ENCODE measurements at regions of chr1 and their contacts with region 1.

Region 1: GRCh38 chr1:45583264-45583665 is 576 bp upstream of the NASP start:
- DNase-seq: peak; percentile 85 to 98 (median 93)
- ATAC-seq: peak; percentile 72
- H3K4me3 ChIP-seq: peak overlapping the region; percentile 82 to 98
- H3K4me3 Mint-ChIP-seq: peak overlapping the region; percentile 92
- H3K27ac ChIP-seq: peak overlapping the region; percentile 86 to 89
- H3K27ac Mint-ChIP-seq: peak overlapping the region; percentile 98
- H3K4me1 ChIP-seq: peaks cover 23% of the 10 kb centered on the region
- H3K4me1 Mint-ChIP-seq: peaks cover 27% of the 10 kb centered on the region
- H3K27me3 ChIP-seq: no peaks in the 10 kb centered on the region
- H3K27me3 Mint-ChIP-seq: no peaks in the 10 kb centered on the region
- CTCF ChIP-seq: no peak

Region 2: DNA sequence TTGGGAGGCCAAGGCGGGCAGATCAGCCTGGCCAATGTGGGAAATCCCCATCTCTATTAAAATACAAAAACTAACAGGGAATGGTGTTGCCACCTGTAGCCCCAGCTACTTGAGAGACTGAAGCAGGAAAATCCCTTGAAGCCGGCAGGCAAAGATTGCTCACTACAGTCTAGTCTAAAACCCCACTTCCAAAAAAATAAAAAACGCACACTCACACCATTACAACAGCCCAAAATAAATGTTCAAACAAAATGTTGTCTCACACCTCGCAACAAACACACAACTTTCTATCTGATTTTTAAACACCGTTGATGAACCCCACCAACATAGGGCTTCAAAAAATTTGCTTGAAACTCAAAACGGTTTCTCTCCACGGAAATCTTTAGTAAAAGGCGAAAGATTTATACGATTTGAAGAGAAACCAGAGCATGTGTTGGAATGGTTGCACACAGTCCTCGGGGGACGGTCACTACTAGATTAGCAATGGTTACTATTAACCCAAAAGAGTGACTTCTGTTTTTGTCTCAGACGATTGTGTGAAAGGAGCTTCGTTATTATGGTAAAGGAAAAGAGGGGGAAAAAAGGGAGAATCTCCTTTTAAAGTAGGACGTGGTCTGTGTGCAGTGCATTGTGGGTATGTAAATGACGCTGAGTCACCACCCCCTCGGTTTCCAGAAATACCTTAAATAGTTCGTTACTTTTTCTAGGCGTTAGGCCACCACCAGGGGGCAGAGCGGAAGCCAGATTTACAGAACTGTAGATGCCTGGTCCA is 852.3 kb before region 1 on chr1 and contains the start of gene RNU5D-1:
- CTCF ChIA-PET with region 1: no interaction called
- POLR2A ChIA-PET with region 1: no interaction called
- intact Hi-C with region 1: loop called (anchors 5 to 10 kb)
- DNase-seq: peak; percentile 86 to 96 (median 94)
- ATAC-seq: peak; percentile 75
- H3K4me3 ChIP-seq: peak within 1 kb of the TSS; percentile 36 to 47
- H3K4me3 Mint-ChIP-seq: peak within 1 kb of the TSS; percentile 84
- H3K27ac ChIP-seq: peak within 1 kb of the TSS; percentile 98 to 99
- H3K27ac Mint-ChIP-seq: peak within 1 kb of the TSS; percentile 100
- H3K4me1 ChIP-seq: peaks cover 14% of the 10 kb centered on the region
- H3K4me1 Mint-ChIP-seq: peaks cover 36% of the 10 kb centered on the region
- H3K27me3 ChIP-seq: no peaks in the 10 kb centered on the region
- H3K27me3 Mint-ChIP-seq: no peaks in the 10 kb centered on the region
- CTCF ChIP-seq: peak; percentile 93
- total RNA-seq, gene RNU5D-1: not detected

Region 3: DNA sequence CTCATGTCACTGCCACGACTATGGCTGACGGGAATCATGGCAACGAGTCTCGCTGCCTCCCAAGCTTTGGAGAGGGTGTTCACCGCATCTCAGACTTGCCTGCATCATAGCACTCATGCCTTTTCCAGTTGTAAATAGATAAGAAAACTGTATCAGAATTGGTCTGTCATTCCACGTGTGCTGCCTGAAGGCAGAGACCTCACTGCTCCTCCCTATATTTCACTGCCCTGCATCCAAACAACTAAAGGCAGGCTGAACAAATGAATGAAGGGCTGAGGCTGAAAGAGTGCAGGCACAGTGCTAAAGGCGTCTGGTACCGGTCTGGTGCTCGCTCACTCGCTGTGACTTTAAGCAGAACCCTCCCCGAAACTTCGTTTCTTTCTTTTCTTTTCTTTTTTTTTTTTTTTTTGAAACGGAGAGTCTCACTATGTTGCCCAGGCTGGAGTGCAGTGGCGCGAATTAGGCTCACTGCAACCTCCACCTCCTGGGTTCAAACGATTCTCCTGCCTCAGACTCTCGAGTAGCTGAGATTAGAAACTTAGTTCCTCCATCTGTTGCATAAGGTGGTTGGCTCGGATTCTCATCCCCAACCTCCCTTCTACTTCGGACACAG is 597.4 kb before region 1 on chr1:
- CTCF ChIA-PET with region 1: no interaction called
- POLR2A ChIA-PET with region 1: no interaction called
- intact Hi-C with region 1: loop called in 1 of 2 experiments (anchors 5 kb)
- DNase-seq: no peak
- ATAC-seq: no peak
- H3K4me3 ChIP-seq: peak overlapping the region; percentile 70 to 85
- H3K4me3 Mint-ChIP-seq: peak overlapping the region; percentile 97
- H3K27ac ChIP-seq: peak overlapping the region; percentile 31 to 42
- H3K27ac Mint-ChIP-seq: peak overlapping the region; percentile 93
- H3K4me1 ChIP-seq: peaks cover 15% of the 10 kb centered on the region
- H3K4me1 Mint-ChIP-seq: peaks cover 30% of the 10 kb centered on the region
- H3K27me3 ChIP-seq: no peaks in the 10 kb centered on the region
- H3K27me3 Mint-ChIP-seq: no peaks in the 10 kb centered on the region
- CTCF ChIP-seq: no peak

Region 4: DNA sequence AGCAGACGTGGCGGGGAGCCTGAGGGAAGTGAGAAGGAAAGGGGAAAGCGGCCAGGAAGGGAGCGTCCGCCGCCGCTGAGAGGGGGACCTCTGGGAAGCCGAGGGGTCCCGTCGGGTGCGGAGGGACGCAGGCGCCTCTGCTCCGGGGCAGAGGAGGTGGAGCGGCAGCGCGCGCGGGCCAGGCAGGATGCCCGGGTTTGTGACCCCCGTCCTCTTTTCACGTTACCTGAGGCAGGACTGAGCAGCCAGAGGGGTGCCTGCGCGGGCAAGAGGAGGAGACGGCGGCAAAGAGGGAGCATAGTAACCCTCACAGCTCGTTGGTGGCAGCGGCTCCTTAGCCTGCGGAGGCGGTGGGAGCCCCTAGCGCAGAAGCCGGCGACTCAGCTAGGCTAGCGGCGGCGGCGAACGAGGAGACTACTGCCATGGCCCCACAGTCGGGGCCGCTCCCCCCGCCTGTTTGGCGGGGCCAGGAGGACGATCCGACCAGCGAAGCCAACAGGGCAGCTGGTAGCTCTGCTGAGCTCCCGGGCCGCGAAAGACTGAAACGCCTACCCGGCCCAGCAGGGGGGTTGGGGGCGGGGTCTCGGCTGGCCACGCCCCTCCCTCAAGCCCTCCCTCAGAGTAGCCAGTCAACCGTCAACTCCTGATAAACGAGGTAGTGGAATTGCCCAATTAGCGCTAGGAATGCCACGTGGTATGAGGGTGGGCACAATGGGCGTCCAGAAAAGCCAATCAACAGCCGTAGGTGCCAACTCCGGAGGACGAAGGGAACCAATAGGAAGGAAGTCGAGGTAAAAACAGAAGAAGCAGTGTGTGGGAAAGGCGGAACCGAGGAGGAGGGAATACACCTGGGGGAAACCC is 92.4 kb before region 1 on chr1 and contains the start of gene TESK2:
- CTCF ChIA-PET with region 1: interaction called, 6 read pairs
- POLR2A ChIA-PET with region 1: interaction called, 6 read pairs
- intact Hi-C with region 1: loop called in 1 of 2 experiments (anchors 1 kb)
- DNase-seq: peak; percentile 94 to 100 (median 95)
- ATAC-seq: peak; percentile 91
- H3K4me3 ChIP-seq: peak within 1 kb of the TSS; percentile 74 to 91
- H3K4me3 Mint-ChIP-seq: no peak within 1 kb of the TSS
- H3K27ac ChIP-seq: peak within 1 kb of the TSS; percentile 49 to 72
- H3K27ac Mint-ChIP-seq: no peak within 1 kb of the TSS
- H3K4me1 ChIP-seq: peaks cover 11% of the 10 kb centered on the region
- H3K4me1 Mint-ChIP-seq: peaks cover 16% of the 10 kb centered on the region
- H3K27me3 ChIP-seq: peaks cover 0 to 3% of the 10 kb centered on the region in 2 experiments
- H3K27me3 Mint-ChIP-seq: no peaks in the 10 kb centered on the region
- CTCF ChIP-seq: no peak
- total RNA-seq, gene TESK2: 4.6 to 5.8 TPM

Region 5: DNA sequence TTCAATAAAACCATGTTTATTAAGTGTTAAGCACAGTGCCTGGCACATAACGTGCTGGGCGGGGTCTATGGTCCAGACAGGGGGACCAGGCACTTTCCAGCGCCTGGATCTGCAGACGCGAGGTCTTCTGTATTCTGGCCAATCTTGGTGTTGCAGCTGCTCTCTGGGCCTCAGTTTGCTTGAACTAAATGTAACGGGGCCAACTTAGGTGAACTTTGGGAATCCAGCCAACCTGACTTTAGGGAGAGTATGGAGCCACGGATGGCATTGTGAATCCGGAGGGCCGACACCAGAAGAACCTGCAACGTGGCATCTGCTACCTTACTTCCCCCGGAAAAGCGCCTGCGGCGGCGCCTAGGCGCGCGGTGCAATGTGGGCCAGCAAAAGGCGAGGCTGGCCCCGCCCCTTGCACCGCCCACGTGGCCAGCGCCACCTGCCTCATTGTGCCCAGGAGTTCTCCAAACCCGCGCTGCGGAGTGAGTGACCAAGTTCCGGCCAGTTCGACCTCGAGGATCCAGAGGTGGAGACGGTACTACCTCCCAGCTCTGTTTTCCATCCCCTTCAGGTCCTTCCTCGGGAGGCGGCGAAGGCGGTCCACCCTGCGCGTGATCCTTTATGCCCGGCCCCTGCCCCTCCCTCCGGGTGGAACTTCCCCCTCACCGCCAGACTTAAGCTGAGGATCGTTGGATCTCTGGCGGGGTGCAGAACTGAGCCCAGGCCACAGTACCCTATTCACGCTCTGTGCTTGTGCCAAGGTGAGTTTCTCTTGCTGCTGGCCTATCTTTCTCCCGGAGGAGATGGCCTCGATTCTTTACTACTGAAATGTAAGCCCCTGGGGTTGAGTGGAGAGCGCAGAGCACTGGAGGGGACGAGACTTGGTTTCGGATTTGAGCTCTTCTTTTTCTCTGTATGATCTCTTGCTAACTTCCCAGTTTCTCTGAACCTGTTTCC is 32.6 kb before region 1 on chr1 and contains the start of gene AKR1A1:
- CTCF ChIA-PET with region 1: interaction called, 3 read pairs
- POLR2A ChIA-PET with region 1: interaction called, 5 read pairs
- intact Hi-C with region 1: loop called (anchors 1 kb)
- DNase-seq: peak; percentile 71 to 93 (median 83)
- ATAC-seq: peak; percentile 94
- H3K4me3 ChIP-seq: peak within 1 kb of the TSS; percentile 85 to 96
- H3K4me3 Mint-ChIP-seq: peak within 1 kb of the TSS; percentile 95
- H3K27ac ChIP-seq: peak within 1 kb of the TSS; percentile 76 to 91
- H3K27ac Mint-ChIP-seq: peak within 1 kb of the TSS; percentile 93
- H3K4me1 ChIP-seq: peaks cover 16% of the 10 kb centered on the region
- H3K4me1 Mint-ChIP-seq: peaks cover 23% of the 10 kb centered on the region
- H3K27me3 ChIP-seq: no peaks in the 10 kb centered on the region
- H3K27me3 Mint-ChIP-seq: no peaks in the 10 kb centered on the region
- CTCF ChIP-seq: no peak
- total RNA-seq, gene AKR1A1: 27.2 to 31.9 TPM

Region 6: DNA sequence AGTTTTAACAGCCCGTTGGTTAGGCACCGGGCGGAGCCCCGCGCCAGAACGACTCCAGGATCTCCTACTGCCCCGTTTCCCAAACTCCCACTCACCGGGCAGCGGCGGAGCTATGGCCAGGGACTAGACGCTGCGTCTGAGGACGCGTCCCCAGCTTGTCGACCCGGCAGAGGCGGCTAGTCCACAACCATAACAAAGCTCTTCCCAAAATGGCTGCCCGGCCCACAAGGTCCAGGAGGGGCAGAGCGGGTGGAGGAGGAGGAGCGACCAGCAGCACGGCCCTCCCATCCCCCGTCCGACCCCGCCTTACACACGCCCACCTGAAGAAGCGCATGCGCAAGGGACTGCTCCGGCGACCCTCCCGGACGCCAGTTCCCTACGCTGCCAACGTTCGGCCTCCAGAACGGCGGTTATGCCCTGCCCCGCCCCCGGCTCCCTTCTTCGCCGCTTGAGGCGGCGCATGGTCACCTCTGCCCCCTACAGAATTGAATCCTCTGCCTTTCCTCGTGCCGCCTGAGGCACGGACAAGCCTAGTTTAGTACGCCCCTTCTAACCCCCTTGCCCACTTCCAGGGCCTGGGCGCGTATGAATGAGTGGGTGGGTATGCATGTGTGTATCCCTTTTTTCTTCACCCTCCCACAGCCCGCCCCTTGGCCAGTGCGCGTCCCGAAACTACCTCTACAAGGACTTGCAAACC is 103.2 kb after region 1 on chr1 and contains the start of gene GPBP1L1:
- CTCF ChIA-PET with region 1: no interaction called
- POLR2A ChIA-PET with region 1: interaction called, 16 read pairs
- intact Hi-C with region 1: loop called (anchors 1 kb)
- DNase-seq: peak; percentile 95 to 98 (median 98)
- ATAC-seq: peak; percentile 72
- H3K4me3 ChIP-seq: peak within 1 kb of the TSS; percentile 99
- H3K4me3 Mint-ChIP-seq: peak within 1 kb of the TSS; percentile 97
- H3K27ac ChIP-seq: peak within 1 kb of the TSS; percentile 84 to 92
- H3K27ac Mint-ChIP-seq: peak within 1 kb of the TSS; percentile 100
- H3K4me1 ChIP-seq: peaks cover 39% of the 10 kb centered on the region
- H3K4me1 Mint-ChIP-seq: peaks cover 59% of the 10 kb centered on the region
- H3K27me3 ChIP-seq: no peaks in the 10 kb centered on the region
- H3K27me3 Mint-ChIP-seq: no peaks in the 10 kb centered on the region
- CTCF ChIP-seq: no peak
- total RNA-seq, gene GPBP1L1: 125 to 128 TPM

Measured in CD8-positive, alpha-beta T cell (primary cell).